ENCODE measurements at regions of chr3 and their contacts with region 1.

Region 1: DNA sequence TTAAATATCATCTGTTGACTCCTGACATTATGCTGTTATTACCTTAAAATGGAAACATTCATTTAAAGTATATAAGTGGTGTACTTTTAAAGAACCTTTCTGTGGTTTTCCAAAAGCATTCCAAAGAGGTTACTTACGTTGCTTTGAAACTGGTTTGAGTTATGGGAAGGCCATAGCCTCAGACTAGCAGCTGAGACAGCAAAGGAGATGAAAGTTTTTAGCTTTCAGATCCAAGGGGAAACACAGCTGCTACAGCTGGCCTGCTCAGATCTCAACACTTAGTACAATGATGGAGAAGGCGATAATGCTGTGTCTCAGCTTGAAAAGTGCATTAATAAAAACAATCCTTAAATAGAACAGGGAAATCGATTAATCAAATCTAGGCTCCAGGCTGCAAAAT is 921.1 kb downstream of the ROBO1 start:
- DNase-seq: no peak
- ATAC-seq: peak in 5 of 8 donors; percentile 49 to 81 (median 67)
- H3K4me3 ChIP-seq: no peak overlapping the region
- H3K27ac ChIP-seq: no peak overlapping the region
- H3K4me1 ChIP-seq: peaks cover 0 to 11% (median 0%) of the 10 kb centered on the region in 9 donors
- H3K27me3 ChIP-seq: no peaks in the 10 kb centered on the region
- CTCF ChIP-seq: no peak

Region 2: GRCh38 chr3:78832785-78833204 is 13.9 kb before region 1 on chr3:
- intact Hi-C with region 1: no loop called
- DNase-seq: no peak
- ATAC-seq: no peak
- H3K4me3 ChIP-seq: no peak overlapping the region
- H3K27ac ChIP-seq: no peak overlapping the region
- H3K4me1 ChIP-seq: no peaks in the 10 kb centered on the region
- H3K27me3 ChIP-seq: no peaks in the 10 kb centered on the region
- CTCF ChIP-seq: no peak

Region 3: GRCh38 chr3:78912259-78912658 is 65.5 kb after region 1 on chr3:
- intact Hi-C with region 1: no loop called
- DNase-seq: no peak
- ATAC-seq: no peak
- H3K4me3 ChIP-seq: no peak overlapping the region
- H3K27ac ChIP-seq: no peak overlapping the region
- H3K4me1 ChIP-seq: peaks cover 0 to 1% (median 0%) of the 10 kb centered on the region in 9 donors
- H3K27me3 ChIP-seq: no peaks in the 10 kb centered on the region
- CTCF ChIP-seq: no peak

Region 4: DNA sequence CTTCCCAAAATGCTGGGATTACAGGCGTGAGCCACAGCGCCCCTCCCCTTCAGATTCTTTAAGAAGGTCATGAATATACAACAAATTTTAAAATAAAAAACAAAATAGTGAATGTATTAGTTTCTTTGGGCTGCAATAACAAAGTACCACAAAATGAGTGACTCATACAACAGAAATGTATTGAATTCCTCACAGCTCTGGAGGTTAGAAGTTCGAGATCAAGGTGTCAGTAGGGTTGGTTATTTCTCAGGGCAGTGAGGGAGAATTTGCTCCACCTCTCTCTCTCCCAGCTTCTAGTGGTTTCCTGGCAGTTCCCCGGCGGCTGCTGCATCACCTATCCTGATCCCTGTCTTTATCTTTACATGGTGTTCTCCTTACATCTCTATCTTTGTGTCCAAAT is 117.1 kb after region 1 on chr3:
- intact Hi-C with region 1: no loop called
- DNase-seq: no peak
- ATAC-seq: no peak
- H3K4me3 ChIP-seq: no peak overlapping the region
- H3K27ac ChIP-seq: no peak overlapping the region
- H3K4me1 ChIP-seq: no peaks in the 10 kb centered on the region
- H3K27me3 ChIP-seq: no peaks in the 10 kb centered on the region
- CTCF ChIP-seq: no peak

Region 5: DNA sequence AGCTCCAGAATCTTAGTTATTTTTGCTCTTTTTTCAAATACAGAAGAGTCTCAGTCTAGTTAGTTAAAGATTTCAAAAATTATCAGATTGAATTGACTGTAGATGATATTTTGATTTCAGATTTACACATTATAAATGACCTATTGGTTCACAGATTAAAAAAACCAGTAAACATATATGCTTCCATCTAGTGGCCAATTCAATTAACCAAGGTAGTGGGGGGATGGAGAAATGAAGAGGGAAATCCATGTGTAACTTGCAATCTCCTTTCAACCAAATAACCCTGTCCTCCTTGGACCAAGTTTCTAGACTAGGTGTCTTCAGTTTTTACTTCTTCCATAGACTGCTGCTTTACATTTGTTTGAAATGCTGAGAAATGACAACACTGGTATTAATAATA is 131.3 kb after region 1 on chr3:
- intact Hi-C with region 1: loop called in 1 of 10 experiments (anchors 10 kb)
- DNase-seq: no peak
- ATAC-seq: no peak
- H3K4me3 ChIP-seq: no peak overlapping the region
- H3K27ac ChIP-seq: no peak overlapping the region
- H3K4me1 ChIP-seq: peaks cover 0 to 4% (median 0%) of the 10 kb centered on the region in 9 donors
- H3K27me3 ChIP-seq: no peaks in the 10 kb centered on the region
- CTCF ChIP-seq: peak in 8 of 9 donors; percentile 13 to 37 (median 26)

Region 6: DNA sequence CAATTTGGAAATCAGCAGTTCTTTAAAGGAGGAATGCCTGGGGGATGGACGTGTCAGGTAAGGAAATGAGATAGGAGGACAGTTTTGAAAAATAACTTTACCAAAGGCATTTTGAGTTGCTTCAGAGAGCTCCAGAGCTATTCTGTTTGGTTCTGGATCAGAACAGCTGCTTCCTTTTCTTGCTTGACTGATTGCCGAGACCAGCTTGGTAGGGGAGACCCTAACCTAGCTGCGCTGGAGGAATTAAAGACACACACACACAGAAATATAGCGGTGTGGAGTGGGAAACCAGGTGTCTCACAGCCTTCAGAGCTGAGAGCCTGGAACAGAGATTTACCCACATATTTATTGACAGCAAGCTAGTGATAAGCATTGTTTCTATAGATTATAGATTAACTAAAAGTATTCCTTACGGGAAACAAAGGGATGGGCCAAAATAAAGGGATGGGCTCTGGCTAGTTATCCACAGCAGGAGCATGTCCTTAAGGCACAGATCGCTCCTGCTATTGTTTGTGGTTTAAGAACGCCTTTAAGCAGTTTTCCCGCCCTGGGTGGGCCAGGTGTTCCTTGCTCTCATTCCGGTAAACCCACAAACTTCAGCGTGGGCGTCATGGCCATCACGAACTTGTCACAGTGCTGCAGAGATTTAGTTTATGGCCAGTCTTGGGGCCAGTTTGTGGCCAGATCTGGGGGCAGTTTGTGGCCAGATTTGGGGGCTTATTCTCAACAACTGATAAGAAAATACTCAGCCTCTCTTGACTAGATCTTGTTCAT is 365.1 kb after region 1 on chr3:
- intact Hi-C with region 1: no loop called
- DNase-seq: no peak
- ATAC-seq: no peak
- H3K4me3 ChIP-seq: no peak overlapping the region
- H3K27ac ChIP-seq: no peak overlapping the region
- H3K4me1 ChIP-seq: no peaks in the 10 kb centered on the region
- H3K27me3 ChIP-seq: no peaks in the 10 kb centered on the region
- CTCF ChIP-seq: no peak